ENCODE measurements at regions of chr22 and their contacts with region 1.

Region 1: DNA sequence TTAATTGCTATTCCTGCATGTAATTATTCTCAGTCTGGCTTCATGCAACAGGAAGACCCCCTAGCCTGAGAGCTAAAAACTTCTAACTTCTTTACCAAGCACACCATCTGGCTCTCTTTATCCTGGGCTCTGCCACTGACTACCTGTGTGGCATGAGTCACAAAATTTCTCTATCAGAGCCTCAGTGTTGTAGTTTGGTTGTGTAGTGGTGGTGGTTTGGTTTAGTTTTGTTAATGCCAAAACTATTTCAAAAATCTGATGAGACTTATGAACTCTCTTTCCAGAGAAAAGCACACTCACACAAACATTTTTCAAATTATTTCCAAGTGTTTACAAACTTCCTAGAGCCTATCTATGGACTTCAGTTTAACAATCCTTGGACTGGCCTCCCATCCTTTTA is 7.5 kb upstream of the IL17RA start:
- DNase-seq: no peak
- H3K4me3 ChIP-seq: no peak overlapping the region
- H3K27ac ChIP-seq: no peak overlapping the region
- H3K4me1 ChIP-seq: no peaks in the 10 kb centered on the region
- CTCF ChIP-seq: no peak

Region 2: DNA sequence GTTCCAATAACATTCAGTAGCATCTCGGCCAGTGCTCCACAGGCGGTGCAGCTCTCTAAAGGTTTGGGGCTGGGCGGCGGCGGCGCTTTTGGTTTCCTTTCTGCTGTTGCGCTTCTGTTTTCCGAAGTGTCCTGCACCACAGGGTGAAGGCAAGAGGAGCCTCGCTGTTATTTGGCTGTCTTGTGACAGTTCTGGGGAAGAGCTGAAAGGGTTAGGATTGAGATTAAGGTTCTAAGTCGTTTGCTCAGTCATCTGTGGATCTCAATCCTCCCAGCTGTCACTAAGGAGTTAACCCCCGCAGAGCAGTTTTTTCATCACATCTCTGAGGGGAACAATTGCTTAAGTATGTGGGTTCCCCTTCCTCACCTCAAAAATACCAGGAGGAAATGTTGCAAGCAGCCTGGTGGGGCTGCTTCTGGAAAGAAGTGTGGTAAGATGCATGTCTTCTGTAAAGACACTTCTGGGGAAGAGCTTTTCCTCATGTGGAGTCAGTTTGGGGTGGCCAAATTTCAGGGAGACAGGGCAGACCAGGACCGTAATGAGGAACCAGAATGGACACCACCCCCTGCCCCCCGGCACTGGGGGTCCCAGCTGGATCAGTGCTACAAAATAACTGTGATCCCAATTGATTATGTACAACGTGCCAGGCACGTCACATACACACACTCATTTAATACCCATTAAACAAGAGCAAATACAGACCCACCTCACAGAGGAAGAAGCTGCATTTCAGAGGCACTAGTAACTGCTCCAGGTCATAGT is 29.7 kb after region 1 on chr22:
- CTCF ChIA-PET with region 1: no interaction called
- POLR2A ChIA-PET with region 1: no interaction called
- intact Hi-C with region 1: no loop called
- DNase-seq: no peak
- H3K4me3 ChIP-seq: no peak overlapping the region
- H3K27ac ChIP-seq: no peak overlapping the region
- H3K4me1 ChIP-seq: no peaks in the 10 kb centered on the region
- CTCF ChIP-seq: no peak

Region 3: DNA sequence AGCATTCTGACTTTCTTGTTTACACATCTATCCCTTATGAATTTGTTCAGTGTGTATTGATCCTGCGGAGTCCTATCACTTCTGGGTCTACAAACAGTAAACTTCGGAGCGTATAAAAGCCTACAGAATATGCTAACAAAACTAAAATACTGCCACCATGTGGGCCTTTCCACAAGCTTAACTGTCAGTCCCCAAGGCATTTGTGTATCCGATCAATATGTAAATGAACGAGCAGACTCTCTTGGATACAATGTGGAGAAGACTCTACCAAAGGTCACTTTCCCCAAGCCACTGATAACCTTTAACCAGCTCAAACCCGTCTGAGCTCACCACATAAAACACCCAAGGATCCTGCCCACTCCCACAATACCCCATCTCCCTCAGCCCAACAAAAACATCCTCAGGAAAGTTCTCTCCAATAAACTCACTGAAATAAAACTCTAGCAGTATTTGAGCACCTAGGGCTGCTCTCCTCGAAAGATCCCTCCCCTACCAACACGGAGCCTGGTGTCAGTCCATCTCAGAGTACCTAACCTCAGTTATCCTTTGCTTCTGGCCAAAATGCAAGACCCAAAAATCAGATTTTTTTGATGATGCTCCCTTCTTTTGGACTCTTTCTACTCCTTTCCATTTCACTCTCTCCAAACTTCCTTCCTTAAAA is 124.2 kb after region 1 on chr22:
- CTCF ChIA-PET with region 1: no interaction called
- POLR2A ChIA-PET with region 1: no interaction called
- intact Hi-C with region 1: loop called (anchors 10 kb)
- DNase-seq: no peak
- H3K4me3 ChIP-seq: no peak overlapping the region
- H3K27ac ChIP-seq: no peak overlapping the region
- H3K4me1 ChIP-seq: no peaks in the 10 kb centered on the region
- CTCF ChIP-seq: peak; percentile 30; the same call in 1 of the 2 replicates

Region 4: GRCh38 chr22:17303840-17304779 is 226.9 kb after region 1 on chr22:
- CTCF ChIA-PET with region 1: no interaction called
- POLR2A ChIA-PET with region 1: no interaction called
- intact Hi-C with region 1: no loop called
- DNase-seq: peak; percentile 41
- H3K4me3 ChIP-seq: no peak overlapping the region
- H3K27ac ChIP-seq: no peak overlapping the region
- H3K4me1 ChIP-seq: peaks cover 11% of the 10 kb centered on the region
- CTCF ChIP-seq: no peak